HEK293 (cell line): ENCODE measurements at regions of chr5 and their contacts with region 1.

Region 1: DNA sequence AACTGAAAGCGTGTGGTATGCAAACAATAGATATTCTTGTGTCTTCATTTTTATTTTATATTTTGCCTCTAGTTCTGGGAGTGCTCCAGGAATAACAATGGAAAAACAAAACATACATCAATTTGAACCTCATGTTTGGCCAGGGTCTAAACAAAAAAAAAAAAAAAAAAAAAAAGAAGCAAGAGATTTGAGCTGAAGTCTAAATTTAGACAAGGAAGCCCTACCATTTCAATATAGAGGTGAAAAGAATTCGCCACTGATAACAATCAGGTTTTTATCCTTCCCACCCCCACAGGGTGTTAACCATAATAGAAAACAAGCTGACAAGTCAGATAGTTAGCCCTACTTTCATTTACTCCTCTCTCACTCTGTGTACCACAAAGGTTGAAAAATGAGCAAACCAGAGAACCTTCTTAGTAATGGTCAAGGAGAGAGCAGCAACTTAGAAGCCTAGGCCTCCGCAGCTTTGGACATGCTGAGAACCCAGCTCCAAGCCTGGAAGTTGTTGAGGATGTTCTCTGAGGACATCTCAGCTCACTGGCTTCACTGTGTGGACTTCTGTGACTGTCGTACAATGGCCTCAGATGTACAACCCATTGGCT is 118.2 kb upstream of the HMHB1 start:
- H3K4me3 ChIP-seq: no peak overlapping the region
- H3K27ac ChIP-seq: no peak overlapping the region
- H3K4me1 ChIP-seq: peaks cover 6% of the 10 kb centered on the region; the same call in 1 of the 2 replicates
- CTCF ChIP-seq: no peak

Region 2: GRCh38 chr5:143707806-143708205 is 14.1 kb after region 1 on chr5:
- CTCF ChIA-PET with region 1: no interaction called
- POLR2A ChIA-PET with region 1: no interaction called
- H3K4me3 ChIP-seq: no peak overlapping the region
- H3K27ac ChIP-seq: no peak overlapping the region
- H3K4me1 ChIP-seq: no peaks in the 10 kb centered on the region
- CTCF ChIP-seq: no peak

Region 3: DNA sequence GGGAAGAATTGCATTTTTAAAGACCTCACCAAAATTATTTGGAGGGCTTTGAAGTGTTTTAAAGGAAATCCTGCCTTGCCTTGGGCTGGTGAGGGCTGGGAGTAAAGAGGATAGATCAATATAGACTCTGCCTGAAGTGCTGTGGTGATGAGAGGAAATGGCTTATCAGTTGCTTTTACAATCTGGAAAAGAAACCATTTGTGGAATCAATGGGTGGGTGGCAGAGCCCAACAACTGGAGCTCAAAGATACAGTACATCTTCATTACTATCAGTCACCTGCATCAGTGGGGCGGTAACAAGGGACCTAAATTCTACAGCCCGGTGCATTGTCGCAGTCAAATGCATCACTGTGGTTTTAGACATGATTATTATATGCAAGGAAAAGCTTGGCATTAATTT is 76.7 kb after region 1 on chr5:
- CTCF ChIA-PET with region 1: no interaction called
- POLR2A ChIA-PET with region 1: interaction called, 10 read pairs
- H3K4me3 ChIP-seq: no peak overlapping the region
- H3K27ac ChIP-seq: no peak overlapping the region
- H3K4me1 ChIP-seq: peaks cover 3% of the 10 kb centered on the region; the same call in 1 of the 2 replicates
- CTCF ChIP-seq: no peak